Activated CD4-positive, alpha-beta T cell treated with anti-CD3 and anti-CD28 coated beads, Interleukin-2, amount 10 ng/mL, durations not matched to agents 24 days and 14 days (primary cell): ENCODE measurements at regions of chr3 and their contacts with region 1.

Region 1: GRCh38 chr3:122383771-122384697 is at the start of gene FAM162A:
- DNase-seq: peak; percentile 98
- H3K4me3 Mint-ChIP-seq: peak within 1 kb of the TSS; percentile 97
- H3K27ac Mint-ChIP-seq: peak within 1 kb of the TSS; percentile 96
- H3K4me1 Mint-ChIP-seq: peaks cover 64% of the 10 kb centered on the region
- H3K27me3 Mint-ChIP-seq: no peaks in the 10 kb centered on the region
- total RNA-seq, gene FAM162A: 77.8 and 84.9 TPM in 2 replicates

Region 2: DNA sequence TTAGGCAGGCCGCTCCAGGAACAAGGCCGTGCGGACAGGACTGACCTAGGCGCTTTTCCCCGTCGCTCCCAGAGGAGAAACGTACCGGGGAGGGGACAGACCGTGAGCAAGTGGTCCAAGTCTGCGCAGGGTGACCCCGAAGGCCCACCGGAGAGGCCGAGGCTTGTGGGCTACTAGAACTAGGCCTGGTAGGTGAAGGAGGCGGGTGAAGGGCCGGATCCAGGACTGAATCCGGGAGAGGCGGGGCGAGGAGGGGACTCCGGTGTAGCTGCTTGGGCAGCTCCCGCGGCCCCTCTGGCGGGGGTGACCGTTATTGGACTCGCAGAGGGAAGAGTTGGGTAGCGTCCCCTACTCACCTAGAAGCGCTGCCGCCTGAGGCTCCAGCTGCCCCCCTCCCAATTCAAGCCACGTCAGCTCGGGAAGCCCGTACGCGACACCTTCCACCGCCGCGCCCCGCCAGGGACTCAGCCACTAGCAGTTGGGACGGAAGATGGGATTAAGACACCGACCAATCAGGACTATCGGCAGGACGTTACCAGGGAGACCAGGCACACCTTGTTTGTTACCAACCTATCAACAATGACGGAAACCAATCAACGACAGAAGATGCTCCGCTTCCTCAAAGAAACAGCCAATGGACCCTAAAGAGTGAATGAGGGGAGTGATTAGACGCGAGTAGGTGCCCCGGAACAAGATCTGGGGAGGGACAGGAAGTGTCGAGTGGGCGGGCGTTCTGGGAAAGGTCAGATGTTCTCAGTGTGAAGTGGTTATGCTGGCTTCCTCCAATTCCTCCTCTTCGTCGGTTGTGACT is 634.6 kb before region 1 on chr3 and contains the start of gene GOLGB1:
- intact Hi-C with region 1: loop called (anchors 5 kb)
- DNase-seq: peak; percentile 97
- H3K4me3 Mint-ChIP-seq: no peak within 1 kb of the TSS
- H3K27ac Mint-ChIP-seq: no peak within 1 kb of the TSS
- H3K4me1 Mint-ChIP-seq: peaks cover 9% of the 10 kb centered on the region
- H3K27me3 Mint-ChIP-seq: peaks cover 20% of the 10 kb centered on the region
- total RNA-seq, gene GOLGB1: 21.0 and 22.2 TPM in 2 replicates

Region 3: GRCh38 chr3:121894301-121894990 is 489.6 kb before region 1 on chr3 and contains the start of gene SLC15A2:
- intact Hi-C with region 1: no loop called
- DNase-seq: no peak
- H3K4me3 Mint-ChIP-seq: no peak within 1 kb of the TSS
- H3K27ac Mint-ChIP-seq: no peak within 1 kb of the TSS
- H3K4me1 Mint-ChIP-seq: no peaks in the 10 kb centered on the region
- H3K27me3 Mint-ChIP-seq: no peaks in the 10 kb centered on the region
- total RNA-seq, gene SLC15A2: 0.95 and 2.7 TPM in 2 replicates

Region 4: GRCh38 chr3:122146466-122146865 is 237.6 kb before region 1 on chr3:
- intact Hi-C with region 1: loop called (anchors 1 kb)
- DNase-seq: peak; percentile 85
- H3K4me3 Mint-ChIP-seq: peak overlapping the region; percentile 19
- H3K27ac Mint-ChIP-seq: peak overlapping the region; percentile 91
- H3K4me1 Mint-ChIP-seq: peaks cover 19% of the 10 kb centered on the region
- H3K27me3 Mint-ChIP-seq: peaks cover under 1% of the 10 kb centered on the region

Region 5: DNA sequence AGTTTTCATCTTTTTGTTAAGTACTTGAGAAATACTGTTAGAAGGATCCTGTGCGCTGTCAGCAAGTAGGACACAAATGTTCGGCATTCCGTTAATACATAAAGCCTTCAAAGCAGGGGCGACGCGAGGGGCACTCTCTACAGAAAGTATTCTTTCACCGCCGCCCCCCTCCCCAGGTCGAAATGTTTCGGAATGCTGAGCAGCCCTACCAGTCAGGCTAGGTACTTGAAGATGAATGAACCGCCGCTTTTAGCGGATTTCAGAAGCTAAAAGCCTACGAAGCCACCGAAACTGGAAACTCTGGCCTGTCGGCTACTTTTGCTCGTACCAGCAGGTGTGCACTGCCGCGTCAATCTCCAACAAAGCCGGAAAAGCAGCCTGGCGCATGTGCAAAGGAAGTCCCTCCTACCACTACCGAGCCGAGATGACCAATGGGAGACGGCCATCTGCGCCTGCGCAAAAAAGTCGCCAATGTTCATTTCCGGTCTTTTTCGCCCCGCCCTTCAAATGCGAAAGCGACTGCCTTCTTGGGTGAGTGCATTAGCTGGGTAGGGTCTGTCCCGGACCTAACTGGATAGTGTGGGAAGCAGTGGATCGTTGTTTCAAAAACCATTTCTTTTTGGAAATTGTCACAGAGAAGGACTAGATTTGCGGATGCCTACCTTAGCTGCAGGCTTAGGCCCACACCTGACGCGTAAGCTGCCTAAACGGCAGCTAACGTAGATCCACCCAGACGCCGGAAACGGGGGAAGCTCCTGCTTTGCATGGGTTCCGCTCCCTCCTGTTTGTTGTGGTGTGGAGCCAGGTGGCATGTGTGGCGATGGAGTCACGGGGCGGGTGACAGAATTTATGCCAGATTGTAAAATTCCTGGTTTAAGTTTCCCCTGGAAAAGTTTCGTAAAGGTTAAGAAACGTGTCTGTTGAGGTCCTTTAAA is 32.0 kb after region 1 on chr3 and contains the start of gene WDR5B:
- intact Hi-C with region 1: loop called (anchors 1 kb)
- DNase-seq: peak; percentile 99
- H3K4me3 Mint-ChIP-seq: peak within 1 kb of the TSS; percentile 98
- H3K27ac Mint-ChIP-seq: peak within 1 kb of the TSS; percentile 99
- H3K4me1 Mint-ChIP-seq: peaks cover 38% of the 10 kb centered on the region
- H3K27me3 Mint-ChIP-seq: peaks cover 3% of the 10 kb centered on the region
- total RNA-seq, gene WDR5B: 4.8 and 4.9 TPM in 2 replicates

Region 6: GRCh38 chr3:122564155-122564912 is 180.3 kb after region 1 on chr3 and contains the starts of genes DTX3L and PARP9:
- intact Hi-C with region 1: loop called (anchors 2 kb)
- DNase-seq: peak; percentile 97
- H3K4me3 Mint-ChIP-seq: peak within 1 kb of the TSS; percentile 95
- H3K27ac Mint-ChIP-seq: peak within 1 kb of the TSS; percentile 98
- H3K4me1 Mint-ChIP-seq: peaks cover 71% of the 10 kb centered on the region
- H3K27me3 Mint-ChIP-seq: no peaks in the 10 kb centered on the region
- total RNA-seq, gene DTX3L: 39.8 and 43.7 TPM in 2 replicates
- total RNA-seq, gene PARP9: 45.7 and 47.9 TPM in 2 replicates

Region 7: DNA sequence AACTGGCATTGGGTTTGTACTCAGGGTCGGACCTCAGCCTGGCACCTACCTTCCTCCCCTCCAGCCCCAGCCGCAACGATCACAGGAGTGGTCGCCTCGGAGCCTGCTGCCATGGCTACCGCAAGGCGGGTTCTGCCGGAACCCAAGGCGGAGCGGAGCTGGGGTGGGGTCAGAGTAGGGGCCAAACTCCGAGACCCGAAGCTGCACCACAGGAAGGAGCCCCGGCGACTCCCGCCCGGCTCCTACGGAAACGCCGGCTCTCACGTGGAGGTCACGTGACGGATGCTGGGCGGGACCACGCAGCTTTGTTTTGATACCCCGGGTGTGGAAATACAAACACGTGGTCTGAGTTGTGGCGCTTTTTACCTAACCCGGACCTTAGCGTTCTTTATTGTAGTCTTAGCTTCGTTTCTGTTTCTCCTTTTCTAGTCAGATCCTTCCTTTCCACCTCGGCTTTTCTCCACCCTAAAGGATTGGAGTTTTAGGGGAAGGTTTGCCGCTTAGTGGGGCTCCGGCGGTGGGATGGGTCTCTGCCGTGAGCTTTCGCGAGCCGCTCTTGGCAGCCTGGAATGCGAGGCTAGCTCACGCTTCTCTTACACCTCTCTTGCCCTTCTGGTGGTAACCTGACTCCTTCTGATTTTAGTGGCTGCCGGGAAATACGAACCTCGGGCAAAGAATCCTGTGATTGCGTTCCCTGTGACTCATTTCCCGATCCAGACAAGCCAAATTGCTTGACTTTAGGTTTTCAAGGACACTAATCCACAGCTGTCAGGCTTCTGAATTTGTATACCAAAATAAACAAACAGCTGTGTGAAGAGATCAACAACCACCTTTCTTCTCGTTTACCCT is 409.8 kb after region 1 on chr3 and contains the start of gene HSPBAP1:
- intact Hi-C with region 1: loop called (anchors 2 kb)
- DNase-seq: peak; percentile 97
- H3K4me3 Mint-ChIP-seq: peak within 1 kb of the TSS; percentile 90
- H3K27ac Mint-ChIP-seq: peak within 1 kb of the TSS; percentile 88
- H3K4me1 Mint-ChIP-seq: peaks cover 32% of the 10 kb centered on the region
- H3K27me3 Mint-ChIP-seq: no peaks in the 10 kb centered on the region
- total RNA-seq, gene HSPBAP1: 7.5 and 8.7 TPM in 2 replicates